Natural killer cell (primary cell): ENCODE measurements at regions of chr12 and their contacts with region 1.

Region 1: DNA sequence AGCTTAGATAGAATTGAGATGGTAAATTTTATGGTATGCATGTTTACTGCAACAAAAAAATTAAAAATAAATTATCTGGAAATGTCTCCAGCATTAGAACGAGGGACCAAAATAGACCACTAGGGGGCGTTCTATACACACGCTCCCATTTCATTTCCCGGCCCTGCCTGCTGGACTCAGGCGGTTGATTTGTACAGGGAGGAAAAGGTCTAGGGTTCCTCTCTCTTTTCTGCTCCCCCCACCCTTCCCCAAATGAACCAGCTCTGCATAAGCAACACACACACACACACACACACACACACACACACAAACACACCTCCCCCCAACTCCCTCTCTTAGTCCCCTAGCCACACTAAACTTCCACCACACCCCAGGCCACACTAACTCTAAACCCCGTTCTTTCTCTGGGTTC is 7.8 kb upstream of the DTX1 start:
- DNase-seq: peak; percentile 25 to 85
- ATAC-seq: peak; percentile 64 to 77 (median 67)
- H3K4me3 ChIP-seq: no peak overlapping the region
- H3K4me3 Mint-ChIP-seq: no peak overlapping the region
- H3K27ac ChIP-seq: no peak overlapping the region
- H3K27ac Mint-ChIP-seq: no peak overlapping the region
- H3K4me1 ChIP-seq: peaks cover 19% of the 10 kb centered on the region
- H3K4me1 Mint-ChIP-seq: peaks cover 0 to 6% of the 10 kb centered on the region in 2 donors
- H3K27me3 ChIP-seq: no peaks in the 10 kb centered on the region
- H3K27me3 Mint-ChIP-seq: peaks cover 8 to 14% of the 10 kb centered on the region in 2 donors
- CTCF ChIP-seq: peak; percentile 69

Region 2: DNA sequence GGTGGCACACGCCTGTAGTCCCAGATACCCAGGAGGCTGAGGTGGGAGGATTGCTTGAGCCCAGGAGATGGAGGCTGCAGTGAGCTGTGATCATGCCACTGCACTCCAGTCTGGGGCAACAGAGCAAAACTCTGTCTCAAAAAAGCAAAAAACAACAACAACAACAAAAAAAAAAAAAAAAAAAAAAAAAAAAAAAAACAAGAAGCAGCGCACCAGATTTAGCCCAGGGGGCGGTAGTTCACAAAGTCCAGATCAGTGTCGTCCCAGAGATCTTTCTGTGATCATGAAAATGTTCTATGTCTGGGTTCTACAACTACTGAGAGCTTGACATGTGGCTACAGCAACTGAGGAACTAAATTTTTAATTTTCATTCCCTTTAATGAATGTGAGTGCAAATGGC is 43.0 kb before region 1 on chr12:
- intact Hi-C with region 1: no loop called
- DNase-seq: no peak
- ATAC-seq: no peak
- H3K4me3 ChIP-seq: no peak overlapping the region
- H3K4me3 Mint-ChIP-seq: no peak overlapping the region
- H3K27ac ChIP-seq: no peak overlapping the region
- H3K27ac Mint-ChIP-seq: no peak overlapping the region
- H3K4me1 ChIP-seq: no peaks in the 10 kb centered on the region
- H3K4me1 Mint-ChIP-seq: no peaks in the 10 kb centered on the region
- H3K27me3 ChIP-seq: no peaks in the 10 kb centered on the region
- H3K27me3 Mint-ChIP-seq: no peaks in the 10 kb centered on the region
- CTCF ChIP-seq: peak; percentile 10

Region 3: GRCh38 chr12:113098446-113098896 is 49.7 kb after region 1 on chr12:
- intact Hi-C with region 1: loop called (anchors 1 kb)
- DNase-seq: peak; percentile 54 to 82
- ATAC-seq: peak in 2 of 3 donors; percentile 69 to 74
- H3K4me3 ChIP-seq: no peak overlapping the region
- H3K4me3 Mint-ChIP-seq: no peak overlapping the region
- H3K27ac ChIP-seq: no peak overlapping the region
- H3K27ac Mint-ChIP-seq: no peak overlapping the region
- H3K4me1 ChIP-seq: peaks cover 36% of the 10 kb centered on the region
- H3K4me1 Mint-ChIP-seq: peaks cover 0 to 5% of the 10 kb centered on the region in 2 donors
- H3K27me3 ChIP-seq: no peaks in the 10 kb centered on the region
- H3K27me3 Mint-ChIP-seq: no peaks in the 10 kb centered on the region
- CTCF ChIP-seq: peak; percentile 81

Region 4: GRCh38 chr12:113174461-113175384 is 126.0 kb after region 1 on chr12:
- intact Hi-C with region 1: loop called (anchors 1 kb)
- DNase-seq: peak; percentile 73 to 86
- ATAC-seq: peak; percentile 84 to 98 (median 88)
- H3K4me3 ChIP-seq: no peak overlapping the region
- H3K4me3 Mint-ChIP-seq: no peak overlapping the region
- H3K27ac ChIP-seq: no peak overlapping the region
- H3K27ac Mint-ChIP-seq: peak overlapping the region; percentile 51 to 84
- H3K4me1 ChIP-seq: no peaks in the 10 kb centered on the region
- H3K4me1 Mint-ChIP-seq: peaks cover 5 to 9% of the 10 kb centered on the region in 2 donors
- H3K27me3 ChIP-seq: no peaks in the 10 kb centered on the region
- H3K27me3 Mint-ChIP-seq: no peaks in the 10 kb centered on the region
- CTCF ChIP-seq: peak; percentile 97

Region 5: DNA sequence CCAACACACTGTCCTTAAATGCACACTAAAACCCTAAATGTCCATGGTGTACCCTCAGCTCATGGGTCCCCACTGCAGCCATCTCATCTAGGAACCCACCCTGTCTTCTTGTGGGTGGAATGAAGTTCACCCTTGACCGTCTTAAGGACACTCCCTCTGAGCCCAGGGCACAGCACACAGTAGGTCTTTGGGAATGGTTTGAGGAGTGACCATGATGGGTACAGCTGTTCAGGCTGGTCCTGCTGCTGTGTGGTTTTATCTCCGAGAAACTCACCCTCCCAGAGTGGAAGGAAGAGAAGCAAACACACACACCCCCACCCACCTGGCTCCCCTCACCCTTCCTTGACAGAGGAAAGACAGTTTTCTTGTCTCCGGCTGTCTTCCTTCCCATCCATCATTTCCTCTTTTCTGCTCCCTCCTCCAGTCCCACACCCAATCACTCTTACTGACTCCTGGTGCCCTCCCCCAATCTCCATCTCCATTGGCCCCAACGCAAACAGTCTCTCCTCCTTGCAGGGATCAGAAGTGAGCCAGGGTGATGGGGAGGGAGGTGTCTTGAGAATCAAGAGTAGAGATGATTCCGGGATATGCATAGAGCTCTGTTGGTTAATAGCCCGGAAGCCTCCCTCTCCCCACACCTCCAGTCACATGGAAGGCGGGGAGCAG is 528.9 kb after region 1 on chr12:
- intact Hi-C with region 1: no loop called
- DNase-seq: no peak
- ATAC-seq: no peak
- H3K4me3 ChIP-seq: no peak overlapping the region
- H3K4me3 Mint-ChIP-seq: no peak overlapping the region
- H3K27ac ChIP-seq: no peak overlapping the region
- H3K27ac Mint-ChIP-seq: no peak overlapping the region
- H3K4me1 ChIP-seq: no peaks in the 10 kb centered on the region
- H3K4me1 Mint-ChIP-seq: no peaks in the 10 kb centered on the region
- H3K27me3 ChIP-seq: no peaks in the 10 kb centered on the region
- H3K27me3 Mint-ChIP-seq: peaks cover 0 to 21% of the 10 kb centered on the region in 2 donors
- CTCF ChIP-seq: no peak